PC-9 (cell line): ENCODE measurements at regions of chr6 and their contacts with region 1.

Region 1: GRCh38 chr6:27157459-27158315 is 89.8 kb upstream of the PRSS16 start:
- DNase-seq: peak; percentile 68 to 69
- H3K4me3 ChIP-seq: peak overlapping the region; percentile 72
- H3K27ac ChIP-seq: peak overlapping the region; percentile 57
- H3K4me1 ChIP-seq: 0 out of 2 replicates have a peak, but pooled peaks cover 8% of the 10 kb centered on the region
- H3K27me3 ChIP-seq: no peaks in the 10 kb centered on the region
- CTCF ChIP-seq: peak; percentile 39; the same call in 1 of the 2 replicates

Region 2: GRCh38 chr6:26607434-26608230 is 550.1 kb before region 1 on chr6:
- CTCF ChIA-PET with region 1: no interaction called
- POLR2A ChIA-PET with region 1: no interaction called
- intact Hi-C with region 1: loop called (anchors 1 kb)
- DNase-seq: peak; percentile 49 to 56
- H3K4me3 ChIP-seq: peak overlapping the region; percentile 37; the same call in 1 of the 2 replicates
- H3K27ac ChIP-seq: no peak overlapping the region
- H3K4me1 ChIP-seq: no peaks in the 10 kb centered on the region
- H3K27me3 ChIP-seq: no peaks in the 10 kb centered on the region
- CTCF ChIP-seq: peak; percentile 83

Region 3: GRCh38 chr6:27101824-27102223 is 55.9 kb before region 1 on chr6:
- CTCF ChIA-PET with region 1: no interaction called
- POLR2A ChIA-PET with region 1: no interaction called
- intact Hi-C with region 1: no loop called
- DNase-seq: no peak
- H3K4me3 ChIP-seq: no peak overlapping the region
- H3K27ac ChIP-seq: no peak overlapping the region
- H3K4me1 ChIP-seq: no peaks in the 10 kb centered on the region
- H3K27me3 ChIP-seq: no peaks in the 10 kb centered on the region
- CTCF ChIP-seq: no peak

Region 4: DNA sequence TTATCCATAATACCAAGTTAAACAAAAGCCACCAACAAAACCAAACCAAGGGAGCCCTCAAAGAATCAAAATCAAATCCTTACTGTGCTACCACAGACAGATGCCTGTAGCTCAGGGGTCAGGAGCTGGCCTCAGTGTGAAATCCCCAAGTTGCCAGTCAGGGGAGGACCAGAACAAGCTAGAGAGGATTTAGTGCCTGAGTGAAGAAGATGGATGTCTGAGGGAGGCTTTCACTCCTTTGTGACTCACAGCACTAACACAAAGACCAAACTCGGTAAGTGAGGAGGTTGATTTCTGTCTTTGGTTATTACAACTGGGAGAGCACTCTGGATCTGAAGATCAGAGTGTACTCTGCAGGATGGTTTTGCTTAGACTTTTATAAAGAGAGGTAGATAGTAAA is 505.1 kb after region 1 on chr6:
- CTCF ChIA-PET with region 1: no interaction called
- POLR2A ChIA-PET with region 1: interaction called, 23 read pairs
- intact Hi-C with region 1: no loop called
- DNase-seq: no peak
- H3K4me3 ChIP-seq: no peak overlapping the region
- H3K27ac ChIP-seq: no peak overlapping the region
- H3K4me1 ChIP-seq: peaks cover 10% of the 10 kb centered on the region
- H3K27me3 ChIP-seq: no peaks in the 10 kb centered on the region
- CTCF ChIP-seq: no peak

Region 5: DNA sequence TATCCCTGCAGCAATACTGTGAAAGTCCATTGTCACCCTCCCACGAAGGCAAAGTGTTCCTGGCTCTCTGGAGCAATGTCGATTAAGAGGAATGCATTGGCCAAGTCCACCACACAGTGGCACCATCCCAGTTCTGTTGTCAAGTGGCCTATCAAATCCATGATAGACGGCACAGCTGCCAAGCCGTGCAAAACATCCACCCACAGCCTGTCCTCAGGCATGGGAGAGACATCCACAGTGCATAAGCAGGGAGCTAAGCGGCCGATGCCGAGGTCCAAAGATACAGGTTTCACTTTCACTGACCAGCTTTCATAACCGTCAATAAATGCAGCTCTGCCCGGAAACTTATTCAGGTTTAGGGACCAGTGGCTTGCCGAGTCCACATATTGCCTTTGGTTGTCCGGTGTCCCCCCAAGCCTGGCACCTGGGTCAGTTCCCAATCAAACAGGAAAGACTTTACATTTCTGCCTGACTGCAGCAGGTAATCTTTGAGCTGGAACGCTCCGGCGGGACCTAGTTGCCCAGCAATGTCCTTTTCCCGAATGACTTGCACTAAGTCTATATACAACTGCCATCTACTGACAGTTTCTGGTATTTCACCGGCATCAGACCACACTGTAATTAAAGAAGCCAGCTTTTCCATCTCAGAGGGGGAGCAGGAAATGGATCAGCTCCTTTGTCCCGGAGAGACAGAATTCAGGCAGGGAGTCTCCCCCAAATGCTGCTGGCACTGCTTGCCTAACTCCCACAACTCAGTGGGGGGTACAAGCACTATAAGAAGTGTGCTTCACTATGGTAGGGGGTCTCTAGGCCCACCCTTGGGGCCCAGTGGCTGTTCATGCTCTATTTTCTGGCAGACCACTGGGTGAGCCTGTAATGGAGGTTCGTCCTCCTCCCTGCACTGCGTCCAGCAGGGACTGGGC is 1198.3 kb after region 1 on chr6:
- CTCF ChIA-PET with region 1: no interaction called
- POLR2A ChIA-PET with region 1: no interaction called
- intact Hi-C with region 1: loop called (anchors 5 kb)
- DNase-seq: peak; percentile 75 to 80
- H3K4me3 ChIP-seq: peak overlapping the region; percentile 70
- H3K27ac ChIP-seq: peak overlapping the region; percentile 55
- H3K4me1 ChIP-seq: peaks cover 28% of the 10 kb centered on the region
- H3K27me3 ChIP-seq: no peaks in the 10 kb centered on the region
- CTCF ChIP-seq: peak; percentile 86